GM13976 (cell line): ENCODE measurements at regions of chr2 and their contacts with region 1.

Region 1: GRCh38 chr2:181457121-181457740 is at the start of gene ITGA4:
- DNase-seq: peak; percentile 87
- CTCF ChIP-seq: peak; percentile 95

Region 2: DNA sequence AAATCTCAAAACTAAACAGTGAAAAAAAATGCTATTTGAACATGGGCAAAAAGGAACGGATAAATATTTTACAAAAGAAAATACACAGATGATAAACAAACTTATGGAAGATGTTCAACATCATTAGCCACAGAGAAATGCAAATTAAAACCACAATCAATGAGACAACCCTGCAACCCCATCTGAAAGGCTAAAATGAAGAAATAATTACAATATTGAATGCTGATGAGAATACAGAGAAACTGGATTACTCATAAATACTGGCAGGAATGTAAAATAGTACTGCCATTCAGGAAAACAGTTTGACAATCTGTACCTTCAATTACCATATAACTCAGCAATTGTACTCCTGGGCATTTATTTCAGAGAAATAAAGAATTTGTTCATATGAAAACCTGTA is 669.9 kb before region 1 on chr2:
- in situ Hi-C with region 1: no loop called
- DNase-seq: no peak
- CTCF ChIP-seq: no peak

Region 3: DNA sequence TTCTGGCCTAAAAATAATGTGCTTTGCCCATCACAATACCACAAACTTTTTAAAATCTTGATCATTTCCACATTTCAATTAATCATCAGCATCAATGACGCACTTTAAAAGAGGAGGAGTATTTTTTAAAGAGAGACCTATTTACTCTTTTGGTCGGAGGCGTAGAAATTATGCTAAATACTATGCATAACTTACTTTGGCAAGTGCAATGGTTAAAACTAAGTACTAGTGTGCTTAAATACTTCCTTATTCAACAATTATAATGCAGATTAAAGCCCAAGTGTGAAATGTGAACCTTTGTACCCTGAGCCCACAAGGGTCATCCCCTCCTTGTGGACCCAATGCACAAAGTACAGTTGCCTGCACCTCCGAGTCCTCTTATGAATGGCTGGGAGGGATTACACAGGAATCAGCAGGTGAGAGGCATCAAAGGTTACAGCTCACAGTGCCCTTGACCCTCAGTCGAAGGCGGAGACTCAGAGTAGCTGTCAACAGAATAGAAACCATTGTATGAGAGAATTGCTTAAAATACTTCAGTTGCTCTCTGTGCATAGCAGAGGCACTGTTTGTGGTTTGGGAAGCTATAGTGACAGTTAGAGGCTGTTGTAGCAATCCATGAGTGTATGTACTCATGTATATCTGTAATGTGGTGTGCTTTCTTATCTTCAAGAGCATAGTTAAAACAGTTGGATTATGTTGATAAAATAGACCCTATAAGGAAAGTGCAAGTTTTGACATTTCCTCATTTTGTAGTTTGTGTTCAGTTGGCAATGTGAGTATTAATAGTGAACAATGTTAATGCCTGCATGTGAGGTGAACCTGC is 151.7 kb before region 1 on chr2:
- in situ Hi-C with region 1: loop called (anchors 5 kb)
- DNase-seq: no peak
- CTCF ChIP-seq: no peak

Region 4: GRCh38 chr2:182182436-182182835 is 725.2 kb after region 1 on chr2:
- in situ Hi-C with region 1: no loop called
- DNase-seq: no peak
- CTCF ChIP-seq: no peak